Activated B cell treated with CpG ODN at 0.5 μM for 24 hours (primary cell): ENCODE measurements at regions of chr15 and their contacts with region 1.

Region 1: DNA sequence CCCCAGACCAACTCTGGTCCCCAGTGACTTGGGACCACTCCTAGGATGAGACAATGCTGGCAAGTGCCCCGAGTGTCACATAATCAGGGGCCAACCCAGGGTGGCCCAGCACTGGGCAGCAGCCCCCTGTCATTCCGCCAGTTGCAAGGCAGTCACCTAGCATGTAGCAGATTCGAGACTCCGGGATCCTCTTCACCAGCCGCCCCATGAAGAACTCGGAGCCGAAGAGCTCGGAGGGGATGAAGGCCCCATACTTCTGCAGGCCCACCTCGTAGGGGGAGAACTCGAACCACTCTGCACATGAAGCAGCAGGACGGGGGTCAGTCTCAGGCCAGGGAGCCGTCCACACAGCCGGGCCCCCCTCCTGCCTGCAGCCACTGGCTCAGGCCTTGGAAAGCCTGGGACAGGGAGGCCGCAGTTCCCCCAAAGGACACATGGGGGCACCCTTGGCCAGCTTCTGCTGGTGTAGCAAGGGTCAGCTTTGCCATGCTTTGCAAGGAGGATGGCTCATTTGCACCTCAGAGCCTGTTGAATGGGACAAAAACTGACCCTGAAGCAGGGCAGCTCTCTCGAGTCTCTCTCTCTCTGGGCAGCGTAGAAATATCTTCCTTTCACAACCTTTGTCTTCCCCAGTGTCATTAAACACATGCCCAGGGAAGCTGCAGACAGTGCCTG is 17.0 kb upstream of the EHD4 start:
- DNase-seq: peak; percentile 83
- ATAC-seq: peak; percentile 100
- H3K4me3 Mint-ChIP-seq: no peak overlapping the region
- H3K27ac Mint-ChIP-seq: no peak overlapping the region
- H3K4me1 Mint-ChIP-seq: no peaks in the 10 kb centered on the region
- H3K27me3 Mint-ChIP-seq: peaks cover 6% of the 10 kb centered on the region
- CTCF ChIP-seq: peak; percentile 85

Region 2: DNA sequence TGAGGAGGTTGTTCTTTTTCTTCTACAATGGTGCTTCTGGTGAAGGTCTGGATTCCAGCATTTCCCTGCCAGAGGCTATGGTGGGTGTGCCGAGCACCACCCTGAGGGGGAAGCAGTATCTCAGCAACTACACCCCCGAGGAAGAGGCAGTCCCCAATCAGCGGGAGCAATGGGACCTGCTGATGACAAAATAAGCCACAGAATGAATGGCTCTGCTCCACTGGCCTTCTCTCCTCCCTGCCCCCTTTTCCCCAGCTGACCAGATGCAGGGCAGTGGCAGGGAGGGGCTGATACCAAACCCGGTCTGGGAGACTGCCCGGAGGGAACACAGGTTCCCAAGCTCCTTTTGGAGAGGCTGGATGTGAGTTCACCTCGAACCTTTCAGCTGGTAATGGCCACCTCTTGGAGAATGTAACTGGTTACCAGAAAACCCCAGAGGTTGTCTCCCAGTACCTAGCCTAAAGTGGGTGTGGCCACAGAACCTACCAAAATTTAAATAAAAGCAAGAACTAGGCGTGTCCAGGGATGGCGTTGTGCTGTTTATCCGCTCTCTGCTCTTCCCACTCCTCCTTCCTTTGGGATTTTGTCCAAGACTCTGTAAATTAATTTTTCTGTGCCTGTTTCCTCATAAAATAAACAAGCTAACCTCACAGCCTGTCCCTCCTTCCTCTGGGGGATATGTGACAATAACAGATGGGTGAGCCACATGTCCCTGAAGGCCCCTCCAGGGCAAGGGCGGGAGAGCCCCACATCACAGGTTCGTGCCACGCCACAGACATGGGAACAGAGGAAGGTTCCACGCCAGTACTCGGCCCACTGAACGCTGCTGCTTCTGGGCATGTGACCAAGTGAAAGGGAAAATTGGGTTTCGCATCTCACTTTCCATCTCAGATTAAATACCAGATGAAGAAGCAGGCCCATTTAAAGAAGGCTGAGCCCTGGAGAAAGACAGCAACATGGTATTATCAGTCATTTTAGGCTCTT is 60.5 kb before region 1 on chr15:
- CTCF ChIA-PET with region 1: no interaction called
- POLR2A ChIA-PET with region 1: no interaction called
- intact Hi-C with region 1: no loop called
- DNase-seq: peak; percentile 70
- ATAC-seq: peak; percentile 95
- H3K4me3 Mint-ChIP-seq: peak overlapping the region; percentile 65
- H3K27ac Mint-ChIP-seq: peak overlapping the region; percentile 88
- H3K4me1 Mint-ChIP-seq: peaks cover 80% of the 10 kb centered on the region
- H3K27me3 Mint-ChIP-seq: no peaks in the 10 kb centered on the region
- CTCF ChIP-seq: no peak

Region 3: DNA sequence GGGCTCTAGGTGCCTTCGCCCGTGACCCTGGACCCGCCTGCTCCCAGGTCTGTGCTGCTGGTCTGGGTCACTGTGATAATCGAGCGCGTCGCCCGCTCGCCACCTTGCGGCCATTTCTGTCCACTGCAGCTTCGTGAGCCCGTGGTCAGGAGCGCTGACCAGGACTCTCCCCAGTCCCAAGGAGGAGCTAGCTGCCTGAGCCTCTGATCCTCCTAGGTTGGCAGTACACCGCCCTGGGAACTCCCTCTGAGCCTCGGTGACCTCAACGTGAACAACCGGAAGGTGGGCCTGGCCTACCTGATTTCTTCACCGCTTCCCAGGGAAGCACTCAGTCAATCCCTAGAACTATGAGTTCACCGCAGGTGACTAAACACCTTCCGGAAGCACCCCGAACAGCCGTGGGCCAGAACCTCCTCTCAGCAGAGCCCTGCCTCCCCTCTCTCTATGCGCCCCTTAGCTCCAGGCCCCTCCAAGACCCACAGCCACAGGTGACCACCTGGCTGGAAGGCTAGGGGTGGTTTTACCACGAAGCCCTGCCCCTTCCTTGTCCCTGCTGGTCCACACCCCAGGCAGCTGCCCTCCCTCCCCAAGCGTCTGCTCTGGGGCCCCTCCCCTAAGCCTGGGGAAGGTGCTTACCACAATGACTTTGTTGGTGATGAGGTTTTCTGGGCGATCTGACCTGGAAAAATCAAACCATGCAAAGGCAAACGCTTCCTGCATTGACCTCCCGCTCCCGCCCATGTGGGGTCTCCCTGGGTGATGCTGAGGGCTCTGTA is 95.3 kb after region 1 on chr15:
- CTCF ChIA-PET with region 1: interaction called, 51 read pairs
- POLR2A ChIA-PET with region 1: interaction called, 4 read pairs
- intact Hi-C with region 1: loop called (anchors 1 kb)
- DNase-seq: peak; percentile 49
- ATAC-seq: peak; percentile 82
- H3K4me3 Mint-ChIP-seq: no peak overlapping the region
- H3K27ac Mint-ChIP-seq: no peak overlapping the region
- H3K4me1 Mint-ChIP-seq: peaks cover 2% of the 10 kb centered on the region
- H3K27me3 Mint-ChIP-seq: peaks cover 14% of the 10 kb centered on the region
- CTCF ChIP-seq: peak; percentile 26

Region 4: GRCh38 chr15:42137431-42138261 is 148.2 kb after region 1 on chr15:
- CTCF ChIA-PET with region 1: interaction called, 6 read pairs
- POLR2A ChIA-PET with region 1: no interaction called
- intact Hi-C with region 1: loop called (anchors 1 kb)
- DNase-seq: peak; percentile 15
- ATAC-seq: no peak
- H3K4me3 Mint-ChIP-seq: no peak overlapping the region
- H3K27ac Mint-ChIP-seq: no peak overlapping the region
- H3K4me1 Mint-ChIP-seq: no peaks in the 10 kb centered on the region
- H3K27me3 Mint-ChIP-seq: peaks cover 3% of the 10 kb centered on the region
- CTCF ChIP-seq: peak; percentile 33